A549 (cell line): ENCODE measurements at regions of chr2 and their contacts with region 1.

Region 1: GRCh38 chr2:71923887-71924533 is 223.7 kb downstream of the CYP26B1 start:
- DNase-seq: peak; percentile 77 to 83
- ATAC-seq: peak; percentile 78 to 94
- H3K4me3 ChIP-seq: no peak overlapping the region
- H3K27ac ChIP-seq: no peak overlapping the region
- H3K4me1 ChIP-seq: peaks cover 6% of the 10 kb centered on the region; the same call in 1 of the 3 replicates
- CTCF ChIP-seq: peak; percentile 93
- EP300 ChIP-seq: no peak
- POLR2A ChIP-seq: no peak
- RAD21 ChIP-seq: peak; percentile 87 to 89

Region 2: GRCh38 chr2:71995067-71995665 is 71.2 kb after region 1 on chr2:
- CTCF ChIA-PET with region 1: interaction called, 10 read pairs
- POLR2A ChIA-PET with region 1: no interaction called
- DNase-seq: peak in 1 of 2 experiments; percentile 47
- ATAC-seq: peak; percentile 61 to 69; a peak in 4 of 6 replicates
- H3K4me3 ChIP-seq: no peak overlapping the region
- H3K27ac ChIP-seq: no peak overlapping the region
- H3K4me1 ChIP-seq: no peaks in the 10 kb centered on the region
- CTCF ChIP-seq: peak; percentile 80
- EP300 ChIP-seq: no peak
- POLR2A ChIP-seq: no peak
- RAD21 ChIP-seq: peak; percentile 74 to 78

Region 3: DNA sequence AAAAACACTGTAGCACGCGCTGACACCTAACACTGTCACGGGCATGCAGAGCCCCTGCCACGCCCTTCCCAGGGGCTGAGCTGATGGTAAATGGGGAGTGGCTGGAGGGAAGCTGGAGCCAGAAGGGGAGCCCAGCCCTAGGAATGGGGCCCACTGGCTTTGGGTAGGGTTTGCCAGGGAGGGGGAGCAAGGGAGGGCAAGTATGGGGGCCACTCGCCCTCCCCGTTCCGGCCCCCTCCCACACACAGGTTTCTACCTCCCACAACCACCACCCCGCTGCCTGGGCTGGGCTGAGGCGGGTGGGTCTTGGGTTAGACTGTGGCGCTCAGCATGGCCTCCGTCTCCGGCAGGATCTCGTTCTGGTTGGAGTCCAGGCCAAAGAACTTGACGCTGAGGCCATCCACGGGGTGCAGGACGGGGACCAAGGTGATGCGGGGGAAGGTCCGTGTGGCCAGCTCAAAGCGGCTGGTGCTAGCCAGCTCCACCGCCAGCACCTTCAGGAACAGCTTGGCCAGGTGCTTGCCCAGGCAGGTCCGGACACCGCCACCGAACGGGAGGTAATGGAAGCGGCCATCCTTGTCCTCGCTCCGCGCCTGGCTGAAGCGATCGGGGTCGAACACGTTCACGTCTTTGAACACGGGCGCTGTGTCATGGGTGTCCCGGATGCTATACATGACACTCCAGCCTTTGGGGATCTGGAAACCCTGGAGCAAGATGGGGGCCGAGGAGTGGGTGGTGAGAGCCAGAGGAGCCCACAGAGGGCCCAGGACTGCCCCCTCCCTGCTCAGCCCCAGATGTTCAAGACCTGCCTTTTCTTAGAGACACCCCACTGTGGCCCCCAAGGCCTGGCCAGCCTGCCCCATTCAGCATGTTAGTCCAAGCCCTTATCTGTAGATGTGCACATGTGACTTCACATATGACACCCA is 208.2 kb after region 1 on chr2:
- CTCF ChIA-PET with region 1: interaction called, 31 read pairs
- POLR2A ChIA-PET with region 1: no interaction called
- DNase-seq: no peak
- ATAC-seq: no peak
- H3K4me3 ChIP-seq: no peak overlapping the region
- H3K27ac ChIP-seq: no peak overlapping the region
- H3K4me1 ChIP-seq: peaks cover 1% of the 10 kb centered on the region; the same call in 2 of the 3 replicates
- CTCF ChIP-seq: no peak
- EP300 ChIP-seq: no peak
- POLR2A ChIP-seq: no peak
- RAD21 ChIP-seq: no peak

Region 4: DNA sequence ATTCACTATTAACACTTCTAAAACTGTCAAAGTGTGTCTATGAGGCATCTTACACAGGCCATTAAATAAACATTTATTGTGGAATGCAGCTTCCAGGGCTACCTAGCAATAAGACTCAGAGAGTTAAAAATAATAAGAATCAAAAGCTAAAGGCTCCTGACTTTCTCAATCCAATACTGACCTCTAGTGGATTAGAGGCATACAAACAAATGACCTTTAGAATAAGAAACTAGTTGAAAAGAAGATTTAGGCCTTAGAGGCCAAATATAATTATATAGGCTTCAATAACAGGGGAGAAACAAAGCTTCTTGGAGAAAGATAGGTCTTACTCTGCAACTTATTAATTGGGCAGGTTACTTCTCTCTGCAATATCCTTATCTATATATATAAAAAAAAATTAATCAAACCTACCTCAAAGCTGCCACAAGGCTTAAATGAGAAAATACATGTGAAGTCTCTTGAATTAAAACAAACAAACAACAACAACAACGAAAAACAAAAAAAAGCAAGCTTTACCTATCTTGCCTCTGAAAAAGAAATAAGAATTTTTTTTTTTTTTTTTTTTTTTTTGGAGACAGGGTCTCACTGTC is 655.7 kb after region 1 on chr2:
- CTCF ChIA-PET with region 1: interaction called, 32 read pairs
- POLR2A ChIA-PET with region 1: no interaction called
- DNase-seq: peak in 1 of 2 experiments; percentile 74
- ATAC-seq: peak; percentile 47 to 79; a peak in 4 of 6 replicates
- H3K4me3 ChIP-seq: no peak overlapping the region
- H3K27ac ChIP-seq: no peak overlapping the region; a peak in 1 of 6 replicates
- H3K4me1 ChIP-seq: peaks cover 23% of the 10 kb centered on the region
- CTCF ChIP-seq: peak; percentile 97
- EP300 ChIP-seq: no peak
- POLR2A ChIP-seq: no peak
- RAD21 ChIP-seq: peak; percentile 94 to 97